CD14-positive monocyte (primary cell): ENCODE measurements at regions of chr1 and their contacts with region 1.

Region 1: GRCh38 chr1:109643385-109644230 is 12.3 kb upstream of the GSTM4 start:
- DNase-seq: peak; percentile 59 to 75 (median 70)
- H3K4me3 ChIP-seq: no peak overlapping the region
- H3K4me3 Mint-ChIP-seq: peak overlapping the region in 1 of 2 donors; percentile 51
- H3K27ac ChIP-seq: no peak overlapping the region
- H3K27ac Mint-ChIP-seq: no peak overlapping the region
- H3K4me1 ChIP-seq: peaks cover 7 to 14% of the 10 kb centered on the region in 2 donors
- H3K4me1 Mint-ChIP-seq: peaks cover 16% of the 10 kb centered on the region
- H3K27me3 ChIP-seq: no peaks in the 10 kb centered on the region
- H3K27me3 Mint-ChIP-seq: peaks cover 3 to 7% (median 4%) of the 10 kb centered on the region in 3 donors
- CTCF ChIP-seq: peak; percentile 93

Region 2: GRCh38 chr1:110011527-110012041 is 368.0 kb after region 1 on chr1:
- intact Hi-C with region 1: loop called in 1 of 2 experiments (anchors 5 kb)
- DNase-seq: peak; percentile 48 to 70 (median 58)
- H3K4me3 ChIP-seq: no peak overlapping the region
- H3K4me3 Mint-ChIP-seq: no peak overlapping the region
- H3K27ac ChIP-seq: peak overlapping the region in 1 of 2 donors; percentile 60
- H3K27ac Mint-ChIP-seq: peak overlapping the region in 6 of 7 donors; percentile 49 to 83 (median 71)
- H3K4me1 ChIP-seq: peaks cover 13 to 20% of the 10 kb centered on the region in 2 donors
- H3K4me1 Mint-ChIP-seq: peaks cover 16% of the 10 kb centered on the region
- H3K27me3 ChIP-seq: no peaks in the 10 kb centered on the region
- H3K27me3 Mint-ChIP-seq: no peaks in the 10 kb centered on the region
- CTCF ChIP-seq: peak; percentile 68